ENCODE measurements at regions of chr20 and their contacts with region 1.

Region 1: DNA sequence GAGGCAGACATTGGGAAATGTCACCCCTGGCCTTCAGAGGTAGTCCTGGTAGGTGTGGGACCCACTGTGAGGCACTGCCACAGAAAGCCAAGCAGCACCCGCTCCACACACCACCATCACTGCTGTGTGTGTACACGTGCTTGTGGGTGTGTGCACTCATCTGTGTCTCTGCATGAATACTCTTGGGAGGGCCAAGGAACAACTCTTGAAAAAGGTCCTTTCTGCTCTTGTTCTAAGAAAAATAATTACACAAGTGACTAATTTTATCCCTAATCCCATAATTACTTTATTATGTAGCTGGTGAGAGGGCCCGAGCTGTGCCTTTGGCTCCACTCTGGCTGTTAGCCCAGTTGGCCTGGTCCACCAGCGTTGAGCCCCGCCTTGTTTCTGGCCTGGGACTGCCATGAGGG is 21.7 kb upstream of the EPB41L1 start:
- DNase-seq: no peak
- H3K4me3 Mint-ChIP-seq: no peak overlapping the region
- H3K27ac Mint-ChIP-seq: no peak overlapping the region
- H3K4me1 Mint-ChIP-seq: no peaks in the 10 kb centered on the region
- H3K27me3 Mint-ChIP-seq: peaks cover 2% of the 10 kb centered on the region

Region 2: GRCh38 chr20:35664544-35665221 is 468.1 kb before region 1 on chr20 and contains the starts of genes CPNE1 and RBM12:
- intact Hi-C with region 1: no loop called
- DNase-seq: peak; percentile 91
- H3K4me3 Mint-ChIP-seq: peak within 1 kb of the TSS; percentile 95
- H3K27ac Mint-ChIP-seq: peak within 1 kb of the TSS; percentile 99
- H3K4me1 Mint-ChIP-seq: peaks cover 48% of the 10 kb centered on the region
- H3K27me3 Mint-ChIP-seq: no peaks in the 10 kb centered on the region
- total RNA-seq, gene CPNE1: 304 and 308 TPM in 2 replicates
- total RNA-seq, gene RBM12: 151 and 168 TPM in 2 replicates

Region 3: DNA sequence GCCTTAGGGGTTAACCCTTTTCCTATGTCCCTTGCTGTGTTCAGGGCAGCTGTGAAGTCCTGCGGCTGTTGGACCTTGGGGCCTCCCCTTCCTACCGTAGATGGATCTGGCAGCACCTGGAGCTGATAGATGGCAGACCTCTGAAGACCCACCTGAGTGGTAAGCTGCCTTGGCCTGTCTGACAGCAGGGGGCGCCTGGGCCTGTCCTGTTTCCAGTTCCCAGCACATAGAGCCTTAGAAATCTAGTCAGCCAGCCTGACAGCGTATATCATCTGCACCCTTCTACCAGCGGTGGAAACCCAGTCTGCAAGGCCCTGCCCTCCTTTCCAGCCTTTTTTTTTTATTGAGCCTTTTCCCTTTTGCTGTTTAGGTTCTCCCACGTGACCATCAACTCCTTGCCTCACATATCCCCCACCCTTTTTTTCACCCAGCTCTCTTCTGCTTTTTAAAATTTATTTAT is 137.8 kb before region 1 on chr20:
- intact Hi-C with region 1: loop called (anchors 1 kb)
- DNase-seq: peak; percentile 43
- H3K4me3 Mint-ChIP-seq: no peak overlapping the region
- H3K27ac Mint-ChIP-seq: no peak overlapping the region
- H3K4me1 Mint-ChIP-seq: no peaks in the 10 kb centered on the region
- H3K27me3 Mint-ChIP-seq: peaks cover 12% of the 10 kb centered on the region